Sciatic nerve (tissue), 2 donors: ENCODE measurements at regions of chr9 and their contacts with region 1.

Region 1: DNA sequence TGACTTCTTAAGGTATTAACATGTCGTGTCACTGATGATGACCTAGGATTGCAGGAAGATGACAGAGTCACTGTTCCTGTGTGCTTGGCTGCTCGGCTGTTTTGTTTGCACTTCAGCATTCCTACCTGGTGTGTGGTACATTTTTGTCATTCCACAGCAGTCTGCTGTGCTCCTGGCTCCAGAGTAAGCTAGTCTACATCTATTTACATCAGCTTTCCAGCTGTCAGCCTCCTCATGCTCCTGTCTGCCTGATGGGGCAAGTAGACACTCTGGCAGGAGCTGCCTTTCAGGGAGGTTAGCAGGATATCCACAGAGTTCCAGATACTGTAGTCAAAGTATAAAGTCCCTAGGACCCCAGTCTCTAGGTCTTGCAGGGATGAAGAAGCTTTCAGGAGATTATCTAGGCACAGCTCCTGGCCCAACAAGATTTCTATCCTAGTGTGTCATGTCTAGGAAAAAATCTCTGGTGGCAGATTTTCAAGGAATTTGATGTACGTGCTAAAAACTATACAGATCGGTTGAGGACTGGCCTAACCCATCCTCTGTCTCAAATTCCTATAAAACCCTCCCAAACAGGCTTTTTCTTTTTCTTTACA is 28.4 kb downstream of the RUSC2 start:
- DNase-seq: no peak
- ATAC-seq: no peak

Region 2: GRCh38 chr9:34169125-34169524 is 1349.2 kb before region 1 on chr9:
- intact Hi-C with region 1: loop called (anchors 5 kb)
- DNase-seq: peak; percentile 1
- ATAC-seq: no peak